ENCODE measurements at regions of chr4 and their contacts with region 1.

Region 1: DNA sequence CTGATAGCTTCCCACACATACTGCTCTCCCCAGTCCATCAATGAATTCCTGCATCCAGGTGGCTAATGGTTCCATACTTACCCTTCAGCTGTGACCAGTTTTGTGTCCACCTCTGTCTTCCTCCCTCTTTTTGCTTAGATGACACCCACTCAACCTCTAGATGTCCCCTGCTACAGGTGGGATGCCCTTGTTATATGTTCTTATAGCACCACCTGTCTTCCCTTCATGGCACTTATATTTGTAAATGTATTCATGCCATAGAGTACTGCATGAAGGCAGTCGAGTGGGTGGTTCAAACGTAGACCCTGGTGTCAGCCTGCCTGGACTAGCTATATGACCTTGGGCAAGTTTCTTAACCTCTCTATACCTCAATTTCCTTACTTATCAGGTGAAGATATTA is 6.5 kb upstream of the USP46 start:
- DNase-seq: no peak
- H3K4me3 Mint-ChIP-seq: no peak overlapping the region
- H3K27ac Mint-ChIP-seq: no peak overlapping the region
- H3K4me1 Mint-ChIP-seq: peaks cover 6% of the 10 kb centered on the region
- H3K27me3 Mint-ChIP-seq: peaks cover 31% of the 10 kb centered on the region

Region 2: DNA sequence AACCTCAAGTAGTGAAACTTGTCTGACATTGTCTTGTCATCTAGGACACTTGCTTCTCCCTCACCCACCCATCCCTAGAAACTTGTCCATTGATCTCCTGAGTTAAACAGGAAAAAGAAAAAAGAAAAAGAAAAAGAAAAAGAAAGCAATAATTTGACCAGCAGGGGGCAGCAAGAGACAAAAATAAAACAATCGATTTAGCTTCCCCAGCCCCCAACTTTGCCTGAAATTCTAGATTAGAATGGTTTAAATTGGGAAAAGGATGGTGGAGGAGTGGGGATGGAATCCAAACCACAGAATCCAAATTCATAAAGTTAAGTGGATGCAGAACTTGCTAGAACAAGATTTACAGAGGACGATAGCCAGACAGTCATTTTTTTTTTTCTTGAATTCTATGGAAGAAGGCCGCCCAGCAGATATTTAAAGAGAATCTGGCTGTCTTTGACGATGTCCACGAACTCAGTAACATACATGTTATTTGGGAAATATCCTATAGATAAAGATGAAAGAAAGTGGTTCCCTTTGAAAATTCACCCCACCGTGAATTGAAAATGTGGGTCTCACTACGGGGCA is 289.4 kb before region 1 on chr4:
- CTCF ChIA-PET with region 1: no interaction called
- intact Hi-C with region 1: loop called (anchors 1 kb)
- DNase-seq: peak; percentile 25
- H3K4me3 Mint-ChIP-seq: no peak overlapping the region
- H3K27ac Mint-ChIP-seq: no peak overlapping the region
- H3K4me1 Mint-ChIP-seq: no peaks in the 10 kb centered on the region
- H3K27me3 Mint-ChIP-seq: peaks cover 15% of the 10 kb centered on the region

Region 3: GRCh38 chr4:52545099-52546069 is 120.2 kb before region 1 on chr4:
- CTCF ChIA-PET with region 1: interaction called, 7 read pairs
- intact Hi-C with region 1: loop called (anchors 2 kb)
- DNase-seq: peak; percentile 71
- H3K4me3 Mint-ChIP-seq: no peak overlapping the region
- H3K27ac Mint-ChIP-seq: no peak overlapping the region
- H3K4me1 Mint-ChIP-seq: no peaks in the 10 kb centered on the region
- H3K27me3 Mint-ChIP-seq: peaks cover 10% of the 10 kb centered on the region

Region 4: GRCh38 chr4:52588097-52588782 is 77.4 kb before region 1 on chr4:
- CTCF ChIA-PET with region 1: no interaction called
- intact Hi-C with region 1: loop called (anchors 2 kb)
- DNase-seq: peak; percentile 31
- H3K4me3 Mint-ChIP-seq: no peak overlapping the region
- H3K27ac Mint-ChIP-seq: no peak overlapping the region
- H3K4me1 Mint-ChIP-seq: peaks cover 6% of the 10 kb centered on the region
- H3K27me3 Mint-ChIP-seq: peaks cover 4% of the 10 kb centered on the region

Region 5: DNA sequence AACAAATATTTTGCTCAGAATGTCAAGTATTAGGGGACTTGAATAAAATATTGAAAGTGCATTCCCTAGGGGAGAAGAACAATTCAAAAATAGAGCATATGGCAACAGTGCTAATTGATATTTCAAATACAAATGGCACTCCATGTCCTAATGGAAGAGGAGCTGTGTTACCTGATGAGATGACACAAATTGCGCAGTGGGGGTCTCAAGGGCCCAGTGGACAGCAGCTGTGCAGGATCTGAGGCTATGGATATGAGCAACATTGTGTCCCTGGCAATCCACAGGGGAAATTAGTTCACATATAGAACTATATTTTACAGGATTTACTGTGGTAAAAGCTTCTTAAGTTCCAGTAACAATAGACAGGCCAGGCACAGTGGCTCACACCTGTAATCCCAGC is 10.9 kb after region 1 on chr4:
- CTCF ChIA-PET with region 1: no interaction called
- intact Hi-C with region 1: no loop called
- DNase-seq: no peak
- H3K4me3 Mint-ChIP-seq: no peak overlapping the region
- H3K27ac Mint-ChIP-seq: no peak overlapping the region
- H3K4me1 Mint-ChIP-seq: no peaks in the 10 kb centered on the region
- H3K27me3 Mint-ChIP-seq: peaks cover 5% of the 10 kb centered on the region